Esophagus squamous epithelium (tissue), 5 donors: ENCODE measurements at regions of chr3 and their contacts with region 1.

Region 1: DNA sequence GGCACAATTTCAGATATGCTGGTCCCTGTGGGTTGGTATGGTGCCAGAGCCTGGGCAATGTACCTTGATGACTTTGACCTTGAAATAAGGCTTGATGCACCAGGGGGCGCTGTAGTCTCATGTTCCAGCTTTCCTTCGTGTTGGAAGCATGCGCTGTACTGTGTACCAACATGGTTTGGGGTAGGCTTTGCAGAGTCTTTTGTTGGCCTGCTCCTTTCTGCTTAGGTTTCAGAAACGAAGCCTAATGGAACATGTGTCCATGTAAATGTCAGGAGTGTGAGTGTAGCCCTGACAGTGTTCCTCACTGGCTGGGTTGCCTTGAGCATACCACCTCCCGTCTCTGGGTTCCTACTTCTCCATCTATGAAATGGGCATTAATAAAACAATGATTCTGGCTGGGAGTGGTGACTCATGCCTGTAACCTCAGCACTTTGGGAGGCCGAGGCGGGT is 3.6 kb upstream of the CCR4 start:
- DNase-seq: peak; percentile 47
- H3K4me3 ChIP-seq: no peak overlapping the region
- H3K27ac ChIP-seq: no peak overlapping the region
- H3K4me1 ChIP-seq: no peaks in the 10 kb centered on the region
- H3K27me3 ChIP-seq: no peaks in the 10 kb centered on the region
- CTCF ChIP-seq: peak; percentile 63 to 82 (median 73)
- POLR2A ChIP-seq: no peak

Region 2: DNA sequence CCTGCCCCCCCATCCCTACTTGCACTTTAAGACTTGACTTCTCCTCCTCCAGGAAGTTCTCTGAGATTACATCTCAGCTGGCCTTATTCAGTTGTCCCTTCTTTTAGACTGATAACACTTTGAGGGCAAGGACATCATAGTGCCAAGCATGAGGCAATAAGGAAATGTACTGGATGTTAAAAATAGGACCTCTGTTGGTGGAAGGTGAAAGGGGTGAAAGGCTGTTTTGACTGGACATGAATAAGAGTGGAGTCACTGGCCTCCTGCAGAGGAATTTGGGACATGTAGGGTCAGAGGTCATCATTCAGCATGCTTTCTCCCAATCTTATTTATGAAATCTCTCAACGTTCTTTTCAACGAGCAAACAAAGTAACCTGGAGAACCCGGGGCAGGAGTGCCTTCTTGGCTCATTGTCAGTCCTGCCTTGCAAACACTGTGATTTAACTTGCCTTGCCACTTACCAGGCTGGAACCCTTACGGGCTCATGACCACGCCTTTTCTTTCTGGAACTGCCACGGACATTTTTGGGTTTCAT is 91.4 kb before region 1 on chr3:
- intact Hi-C with region 1: no loop called
- DNase-seq: no peak
- H3K4me3 ChIP-seq: no peak overlapping the region
- H3K27ac ChIP-seq: no peak overlapping the region
- H3K4me1 ChIP-seq: peaks cover 0 to 9% (median 0%) of the 10 kb centered on the region in 3 donors
- H3K27me3 ChIP-seq: no peaks in the 10 kb centered on the region
- CTCF ChIP-seq: no peak
- POLR2A ChIP-seq: no peak

Region 3: GRCh38 chr3:33074217-33075067 is 126.6 kb after region 1 on chr3:
- intact Hi-C with region 1: loop called (anchors 5 kb)
- DNase-seq: no peak
- H3K4me3 ChIP-seq: no peak overlapping the region
- H3K27ac ChIP-seq: no peak overlapping the region
- H3K4me1 ChIP-seq: peaks cover 0 to 6% (median 5%) of the 10 kb centered on the region in 3 donors
- H3K27me3 ChIP-seq: no peaks in the 10 kb centered on the region
- CTCF ChIP-seq: peak; percentile 68 to 84 (median 80)
- POLR2A ChIP-seq: no peak

Region 4: DNA sequence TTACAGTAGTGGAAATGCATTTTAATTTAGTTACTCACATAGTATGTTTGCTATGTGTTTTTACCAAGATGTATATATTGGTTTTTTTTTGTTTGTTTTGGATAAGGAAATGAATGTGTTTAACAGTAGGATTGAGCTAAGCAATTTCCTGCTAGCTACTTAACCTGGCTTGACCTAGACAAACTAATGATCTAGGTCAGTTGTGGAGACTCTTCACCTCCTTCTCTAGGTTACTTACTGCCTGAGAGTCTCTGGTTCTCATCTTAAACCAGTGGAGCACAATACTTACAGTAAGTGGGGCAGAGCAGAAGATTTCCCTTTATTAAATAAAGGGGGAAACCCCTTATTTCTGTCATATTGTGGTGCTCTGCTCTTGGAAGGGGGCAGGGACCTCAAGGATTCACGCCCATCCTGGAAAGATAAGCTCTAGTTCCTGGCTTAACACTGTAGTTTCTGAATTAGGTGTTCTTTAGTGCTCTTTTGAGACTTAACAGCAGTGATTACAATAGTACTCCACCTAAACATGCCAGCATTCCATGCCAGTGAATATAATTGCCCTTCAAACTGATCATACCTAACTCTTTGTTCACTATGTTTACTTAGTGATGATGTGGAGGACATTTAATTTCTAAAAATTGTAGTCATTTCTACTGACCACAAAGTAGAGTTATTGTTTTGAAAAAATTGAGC is 412.5 kb after region 1 on chr3:
- intact Hi-C with region 1: loop called (anchors 10 kb)
- DNase-seq: no peak
- H3K4me3 ChIP-seq: no peak overlapping the region
- H3K27ac ChIP-seq: peak overlapping the region in 2 of 4 donors; percentile 42 to 64
- H3K4me1 ChIP-seq: peaks cover 0 to 10% (median 4%) of the 10 kb centered on the region in 3 donors
- H3K27me3 ChIP-seq: no peaks in the 10 kb centered on the region
- CTCF ChIP-seq: no peak
- POLR2A ChIP-seq: no peak